Calu3 (cell line): ENCODE measurements at regions of chr2 and their contacts with region 1.

Region 1: GRCh38 chr2:155377266-155377680 is 678.8 kb downstream of the KCNJ3 start:
- DNase-seq: no peak
- H3K4me3 Mint-ChIP-seq: no peak overlapping the region
- H3K27ac Mint-ChIP-seq: no peak overlapping the region
- H3K4me1 Mint-ChIP-seq: no peaks in the 10 kb centered on the region
- H3K27me3 Mint-ChIP-seq: no peaks in the 10 kb centered on the region
- CTCF ChIP-seq: peak; percentile 14

Region 2: DNA sequence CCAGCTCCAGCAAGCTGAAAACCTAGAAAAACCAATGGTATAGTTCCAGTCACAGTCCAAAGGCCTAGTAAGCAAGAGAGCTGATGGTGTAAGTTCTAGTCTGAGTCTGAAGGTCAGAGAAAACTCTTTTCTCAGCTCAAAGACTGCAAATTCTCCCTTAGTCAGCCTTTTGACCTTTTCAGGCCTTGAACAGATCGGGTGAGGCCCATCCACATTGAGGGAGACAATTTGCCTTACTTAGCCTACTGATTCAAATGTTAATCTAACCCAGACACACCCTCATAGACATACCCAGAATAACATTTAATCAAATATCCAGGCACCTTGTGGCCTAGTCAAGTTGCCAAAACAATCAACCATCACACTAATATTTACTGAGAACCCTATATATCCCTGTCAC is 789.5 kb before region 1 on chr2:
- CTCF ChIA-PET with region 1: no interaction called
- intact Hi-C with region 1: no loop called
- DNase-seq: no peak
- H3K4me3 Mint-ChIP-seq: no peak overlapping the region
- H3K27ac Mint-ChIP-seq: no peak overlapping the region
- H3K4me1 Mint-ChIP-seq: no peaks in the 10 kb centered on the region
- H3K27me3 Mint-ChIP-seq: no peaks in the 10 kb centered on the region
- CTCF ChIP-seq: no peak

Region 3: GRCh38 chr2:155240176-155240575 is 137.1 kb before region 1 on chr2:
- CTCF ChIA-PET with region 1: no interaction called
- intact Hi-C with region 1: no loop called
- DNase-seq: no peak
- H3K4me3 Mint-ChIP-seq: no peak overlapping the region
- H3K27ac Mint-ChIP-seq: no peak overlapping the region
- H3K4me1 Mint-ChIP-seq: no peaks in the 10 kb centered on the region
- H3K27me3 Mint-ChIP-seq: no peaks in the 10 kb centered on the region
- CTCF ChIP-seq: no peak

Region 4: DNA sequence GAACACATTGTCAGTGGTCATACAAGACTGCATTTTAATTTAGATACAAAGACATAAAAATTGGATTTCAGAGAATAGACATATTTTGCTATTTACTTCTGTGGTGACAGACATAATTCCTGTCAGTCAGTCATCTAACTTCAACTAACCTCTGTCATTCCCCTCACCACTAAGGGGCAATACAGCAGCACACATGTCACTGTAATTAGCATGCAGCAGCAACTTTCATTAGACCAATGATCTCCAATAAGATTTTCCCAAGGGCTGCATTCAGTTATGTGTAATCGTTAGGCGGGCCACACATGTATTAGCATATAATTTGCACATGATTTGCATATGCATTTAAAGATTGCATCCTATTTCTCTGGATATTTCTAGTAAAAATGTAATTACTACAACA is 330.8 kb after region 1 on chr2:
- CTCF ChIA-PET with region 1: no interaction called
- intact Hi-C with region 1: loop called (anchors 5 kb)
- DNase-seq: peak; percentile 3
- H3K4me3 Mint-ChIP-seq: no peak overlapping the region
- H3K27ac Mint-ChIP-seq: no peak overlapping the region
- H3K4me1 Mint-ChIP-seq: no peaks in the 10 kb centered on the region
- H3K27me3 Mint-ChIP-seq: no peaks in the 10 kb centered on the region
- CTCF ChIP-seq: no peak

Region 5: DNA sequence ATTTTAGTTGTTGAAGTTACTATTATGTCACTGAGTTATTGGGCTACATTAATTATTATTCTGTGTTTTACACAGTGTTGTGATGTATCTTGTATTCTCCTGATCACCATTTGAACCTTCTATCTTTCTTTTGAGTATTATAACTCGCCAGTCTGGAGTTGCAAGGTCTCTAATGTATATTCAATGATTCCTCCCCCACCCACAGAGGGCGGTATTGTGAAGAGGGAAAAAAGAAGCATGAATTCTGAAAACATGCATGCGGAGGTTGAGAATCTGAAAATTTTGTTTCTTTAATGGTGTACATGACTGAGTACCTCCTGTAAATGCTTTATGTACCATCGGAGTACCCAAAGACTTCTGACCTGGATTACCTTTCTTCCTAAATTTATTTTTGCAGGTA is 688.6 kb after region 1 on chr2:
- CTCF ChIA-PET with region 1: no interaction called
- intact Hi-C with region 1: loop called (anchors 1 kb)
- DNase-seq: peak; percentile 58
- H3K4me3 Mint-ChIP-seq: no peak overlapping the region
- H3K27ac Mint-ChIP-seq: no peak overlapping the region
- H3K4me1 Mint-ChIP-seq: no peaks in the 10 kb centered on the region
- H3K27me3 Mint-ChIP-seq: no peaks in the 10 kb centered on the region
- CTCF ChIP-seq: peak; percentile 36

Region 6: DNA sequence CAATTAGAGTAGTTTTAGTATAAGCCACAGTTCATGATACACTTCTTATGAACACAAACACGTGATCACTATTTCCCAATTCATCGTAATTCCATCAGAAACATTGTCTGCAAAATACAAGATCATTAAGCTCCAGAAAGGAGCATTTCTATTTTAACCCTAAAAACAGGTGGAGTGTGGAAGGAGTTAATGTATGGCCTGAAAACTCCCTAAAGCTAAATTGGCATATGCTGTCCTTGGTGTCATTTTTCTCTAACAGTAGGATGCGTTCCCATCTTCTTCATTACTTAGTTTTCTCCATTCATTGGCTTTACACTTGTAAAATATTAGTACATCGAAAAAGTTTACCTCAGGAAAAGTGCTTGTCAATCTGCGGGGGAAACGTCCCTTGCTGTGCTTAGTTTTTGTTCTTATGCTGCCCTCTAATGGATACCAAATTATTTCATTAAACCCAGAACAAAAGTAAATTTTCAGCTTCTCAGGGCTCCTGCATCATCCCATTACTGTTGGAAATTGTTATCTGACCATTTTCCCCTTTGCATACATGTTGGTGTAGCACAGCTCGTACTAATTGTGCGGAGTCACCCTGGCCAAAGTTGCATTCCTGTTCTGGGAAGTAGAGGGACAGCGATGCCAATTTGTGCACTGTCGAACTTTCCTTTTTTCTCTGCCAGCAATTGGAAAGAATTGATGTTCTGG is 1212.3 kb after region 1 on chr2:
- CTCF ChIA-PET with region 1: no interaction called
- intact Hi-C with region 1: loop called (anchors 2 kb)
- DNase-seq: peak; percentile 6
- H3K4me3 Mint-ChIP-seq: no peak overlapping the region
- H3K27ac Mint-ChIP-seq: no peak overlapping the region
- H3K4me1 Mint-ChIP-seq: no peaks in the 10 kb centered on the region
- H3K27me3 Mint-ChIP-seq: no peaks in the 10 kb centered on the region
- CTCF ChIP-seq: peak; percentile 28